CD4-positive, alpha-beta memory T cell (primary cell): ENCODE measurements at regions of chr5 and their contacts with region 1.

Region 1: DNA sequence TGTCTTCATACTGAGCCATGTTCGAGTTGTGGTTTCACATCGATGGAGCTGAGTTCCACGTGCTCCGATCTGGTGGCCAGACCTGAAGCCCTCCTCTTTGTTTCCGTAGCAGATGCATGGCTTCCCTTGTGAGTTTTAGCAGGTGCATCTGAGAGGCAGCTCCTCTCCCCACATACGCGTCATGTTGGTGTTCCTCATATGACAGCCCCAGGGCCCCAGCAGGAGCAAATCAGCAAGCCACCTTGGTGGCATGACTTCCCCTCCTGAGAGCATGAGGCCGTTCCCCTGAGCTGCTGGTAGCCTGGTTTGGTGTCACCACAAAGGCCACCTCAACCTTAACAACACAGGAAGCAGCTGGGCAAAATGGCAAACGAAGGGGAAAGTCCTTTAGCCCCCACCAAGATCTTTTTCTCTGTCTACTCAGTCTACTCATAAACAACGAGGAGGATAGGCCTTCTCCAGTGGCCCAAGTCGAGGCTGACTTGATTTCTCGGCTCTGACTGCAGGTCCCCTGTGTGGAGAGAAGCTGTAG is 5.9 kb downstream of the CYFIP2 start:
- DNase-seq: peak; percentile 89 to 96 (median 93)
- H3K4me3 ChIP-seq: peak overlapping the region in 1 of 2 donors; percentile 33
- H3K4me3 Mint-ChIP-seq: peak overlapping the region; percentile 77 to 97 (median 86)
- H3K27ac ChIP-seq: peak overlapping the region; percentile 69
- H3K27ac Mint-ChIP-seq: peak overlapping the region; percentile 96 to 100 (median 98)
- H3K4me1 ChIP-seq: peaks cover 99% of the 10 kb centered on the region
- H3K4me1 Mint-ChIP-seq: peaks cover 73 to 96% (median 83%) of the 10 kb centered on the region in 4 donors
- H3K27me3 ChIP-seq: no peaks in the 10 kb centered on the region
- H3K27me3 Mint-ChIP-seq: no peaks in the 10 kb centered on the region

Region 2: GRCh38 chr5:157189223-157189622 is 82.6 kb before region 1 on chr5:
- CTCF ChIA-PET with region 1: no interaction called
- POLR2A ChIA-PET with region 1: interaction called, 53 read pairs
- intact Hi-C with region 1: no loop called
- DNase-seq: no peak
- H3K4me3 ChIP-seq: peak overlapping the region; percentile 44 to 59
- H3K4me3 Mint-ChIP-seq: peak overlapping the region; percentile 84 to 100 (median 96)
- H3K27ac ChIP-seq: peak overlapping the region; percentile 64
- H3K27ac Mint-ChIP-seq: peak overlapping the region; percentile 84 to 97 (median 93)
- H3K4me1 ChIP-seq: peaks cover 97% of the 10 kb centered on the region
- H3K4me1 Mint-ChIP-seq: peaks cover 66 to 91% (median 78%) of the 10 kb centered on the region in 4 donors
- H3K27me3 ChIP-seq: no peaks in the 10 kb centered on the region
- H3K27me3 Mint-ChIP-seq: no peaks in the 10 kb centered on the region

Region 3: DNA sequence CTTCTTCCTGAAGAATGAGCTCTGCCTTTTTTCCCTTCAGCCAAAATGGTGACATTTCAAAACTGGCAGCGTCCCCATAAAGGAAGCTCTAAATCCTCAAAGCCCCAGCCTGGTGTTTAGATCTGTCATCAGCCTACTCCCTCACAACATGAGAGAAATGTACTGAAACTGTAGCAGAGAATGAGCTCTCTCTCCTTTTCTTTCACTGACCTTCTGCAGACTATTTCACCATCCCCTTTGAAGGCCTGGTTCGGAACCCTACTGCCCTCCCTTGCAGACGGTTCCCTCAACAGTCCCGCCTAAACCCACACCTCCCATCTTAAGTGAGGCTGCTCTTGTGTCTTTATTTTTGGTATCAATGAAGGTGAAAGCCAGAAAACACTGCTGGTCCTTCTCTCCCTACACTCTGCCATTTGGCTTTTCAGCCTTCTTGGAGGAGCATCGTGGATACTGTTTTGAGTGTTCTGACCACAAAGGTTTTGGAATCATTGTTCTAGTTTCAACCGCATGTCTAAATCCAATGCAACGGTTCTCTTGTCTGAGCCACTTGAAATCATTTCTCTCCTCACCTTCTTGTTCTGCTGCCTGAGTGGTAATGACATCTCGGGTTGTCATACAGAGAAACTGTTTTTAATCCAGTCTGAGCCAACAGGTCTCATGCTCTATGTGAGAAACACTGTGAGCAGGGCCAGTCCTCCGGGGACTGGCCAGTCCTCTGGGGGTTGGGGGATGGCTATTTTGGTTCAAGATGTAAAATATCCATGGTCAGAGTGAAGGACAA is 52.1 kb before region 1 on chr5:
- CTCF ChIA-PET with region 1: interaction called, 5 read pairs
- POLR2A ChIA-PET with region 1: interaction called, 21 read pairs
- intact Hi-C with region 1: no loop called
- DNase-seq: no peak
- H3K4me3 ChIP-seq: no peak overlapping the region
- H3K4me3 Mint-ChIP-seq: peak overlapping the region in 7 of 8 donors; percentile 57 to 76 (median 67)
- H3K27ac ChIP-seq: peak overlapping the region; percentile 44
- H3K27ac Mint-ChIP-seq: peak overlapping the region; percentile 87 to 96 (median 93)
- H3K4me1 ChIP-seq: peaks cover 98% of the 10 kb centered on the region
- H3K4me1 Mint-ChIP-seq: peaks cover 71 to 85% (median 81%) of the 10 kb centered on the region in 4 donors
- H3K27me3 ChIP-seq: no peaks in the 10 kb centered on the region
- H3K27me3 Mint-ChIP-seq: no peaks in the 10 kb centered on the region

Region 4: GRCh38 chr5:157283434-157283833 is 11.6 kb after region 1 on chr5:
- CTCF ChIA-PET with region 1: interaction called, 6 read pairs
- POLR2A ChIA-PET with region 1: interaction called, 80 read pairs
- intact Hi-C with region 1: loop called (anchors 1 kb)
- DNase-seq: peak in 1 of 5 donors; percentile 32
- H3K4me3 ChIP-seq: no peak overlapping the region
- H3K4me3 Mint-ChIP-seq: peak overlapping the region in 7 of 8 donors; percentile 1 to 55 (median 46)
- H3K27ac ChIP-seq: no peak overlapping the region
- H3K27ac Mint-ChIP-seq: peak overlapping the region; percentile 33 to 91 (median 78)
- H3K4me1 ChIP-seq: peaks cover 88% of the 10 kb centered on the region
- H3K4me1 Mint-ChIP-seq: peaks cover 61 to 85% (median 68%) of the 10 kb centered on the region in 4 donors
- H3K27me3 ChIP-seq: no peaks in the 10 kb centered on the region
- H3K27me3 Mint-ChIP-seq: no peaks in the 10 kb centered on the region

Region 5: GRCh38 chr5:157303667-157304327 is 32.0 kb after region 1 on chr5:
- CTCF ChIA-PET with region 1: interaction called, 25 read pairs
- POLR2A ChIA-PET with region 1: interaction called, 96 read pairs
- intact Hi-C with region 1: no loop called
- DNase-seq: peak; percentile 54 to 72 (median 66)
- H3K4me3 ChIP-seq: peak overlapping the region; percentile 27 to 33
- H3K4me3 Mint-ChIP-seq: peak overlapping the region; percentile 78 to 94 (median 86)
- H3K27ac ChIP-seq: peak overlapping the region; percentile 23
- H3K27ac Mint-ChIP-seq: peak overlapping the region; percentile 79 to 94 (median 93)
- H3K4me1 ChIP-seq: peaks cover 60% of the 10 kb centered on the region
- H3K4me1 Mint-ChIP-seq: peaks cover 48 to 69% (median 60%) of the 10 kb centered on the region in 4 donors
- H3K27me3 ChIP-seq: no peaks in the 10 kb centered on the region
- H3K27me3 Mint-ChIP-seq: no peaks in the 10 kb centered on the region